Kidney (tissue), 22 donors: ENCODE measurements at regions of chr10 and their contacts with region 1.

Region 1: GRCh38 chr10:99248824-99249223 is 13.2 kb upstream of the HPSE2 start:
- DNase-seq: no peak
- H3K4me3 ChIP-seq: no peak overlapping the region
- H3K27ac ChIP-seq: no peak overlapping the region
- H3K4me1 ChIP-seq: no peaks in the 10 kb centered on the region
- H3K27me3 ChIP-seq: no peaks in the 10 kb centered on the region
- CTCF ChIP-seq: no peak

Region 2: DNA sequence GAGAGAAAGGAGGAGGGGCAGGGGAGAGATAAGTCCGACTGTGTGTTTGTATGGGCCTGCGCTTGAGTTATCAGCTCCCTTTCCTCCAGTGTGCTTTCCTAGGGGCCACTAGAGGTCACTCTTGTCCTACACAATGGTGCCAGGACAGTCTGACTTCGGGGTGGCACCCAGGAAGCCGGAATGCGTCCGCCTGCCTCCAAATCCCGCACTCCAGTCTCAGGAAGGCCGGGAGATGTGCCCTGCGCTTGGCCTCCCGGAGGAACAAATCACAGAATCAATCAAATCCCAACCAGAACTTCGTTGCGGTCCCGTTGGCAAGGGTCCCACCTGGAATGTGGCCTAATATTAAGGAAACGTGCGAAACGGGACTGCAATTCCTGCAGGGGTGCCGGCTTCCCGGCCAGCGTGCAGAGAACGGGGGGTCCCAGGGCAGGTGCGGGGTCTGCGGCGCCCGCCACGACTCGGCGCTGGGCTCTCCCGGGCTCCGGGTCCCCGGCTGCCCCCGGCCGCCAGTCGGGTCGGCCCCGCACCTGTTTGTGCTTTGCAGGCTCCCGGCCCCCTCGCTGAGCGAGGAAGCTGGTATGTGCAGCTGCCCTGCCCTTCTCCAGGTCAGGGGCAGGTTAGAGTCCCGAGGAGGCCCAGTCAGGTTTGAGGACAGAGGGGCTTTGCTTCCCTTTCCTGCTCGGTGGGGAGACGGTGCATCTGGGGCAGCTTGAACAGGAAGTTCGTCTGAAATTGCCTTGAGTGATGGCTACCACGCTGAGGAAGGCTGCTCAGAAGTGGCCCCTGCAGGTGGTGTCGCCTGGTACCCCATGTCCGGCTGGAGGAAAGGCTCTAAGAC is 781.1 kb before region 1 on chr10:
- intact Hi-C with region 1: loop called (anchors 5 kb)
- DNase-seq: peak; percentile 80 to 94 (median 89)
- H3K4me3 ChIP-seq: peak overlapping the region; percentile 61 to 71 (median 63)
- H3K27ac ChIP-seq: no peak overlapping the region
- H3K4me1 ChIP-seq: peaks cover 0 to 3% (median 0%) of the 10 kb centered on the region in 3 donors
- H3K27me3 ChIP-seq: no peaks in the 10 kb centered on the region
- CTCF ChIP-seq: peak; percentile 88

Region 3: DNA sequence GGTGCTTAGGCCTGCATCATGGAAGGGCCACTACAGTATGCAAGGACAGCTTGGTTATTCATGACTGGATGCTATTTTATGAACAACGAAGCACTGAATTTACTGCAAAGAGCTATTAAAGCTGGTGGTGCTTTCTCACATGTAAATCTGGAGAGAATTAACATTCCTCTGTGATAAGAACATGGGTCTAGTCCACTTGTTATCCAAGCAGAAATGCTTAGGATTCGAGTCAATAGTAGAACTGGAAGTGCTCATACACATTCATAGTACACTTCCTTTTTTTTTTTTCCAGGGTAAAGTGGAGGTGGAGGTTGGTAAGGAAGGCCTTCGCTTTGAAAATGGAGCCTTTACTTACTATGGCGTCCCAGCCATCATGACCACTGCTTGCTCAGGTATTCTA is 115.3 kb after region 1 on chr10:
- intact Hi-C with region 1: no loop called
- DNase-seq: no peak
- H3K4me3 ChIP-seq: no peak overlapping the region
- H3K27ac ChIP-seq: no peak overlapping the region
- H3K4me1 ChIP-seq: no peaks in the 10 kb centered on the region
- H3K27me3 ChIP-seq: no peaks in the 10 kb centered on the region
- CTCF ChIP-seq: no peak